ENCODE measurements at regions of chrX and their contacts with region 1.

Region 1: GRCh38 chrX:154428176-154429010 is at the start of gene ATP6AP1:
- DNase-seq: peak; percentile 81 to 92
- ATAC-seq: peak; percentile 97 to 99 (median 97)
- H3K4me3 ChIP-seq: peak within 1 kb of the TSS; percentile 60
- H3K4me3 Mint-ChIP-seq: peak within 1 kb of the TSS; percentile 86
- H3K27ac ChIP-seq: peak within 1 kb of the TSS; percentile 53
- H3K27ac Mint-ChIP-seq: peak within 1 kb of the TSS; percentile 83 to 84
- H3K4me1 ChIP-seq: peaks cover 37% of the 10 kb centered on the region
- H3K4me1 Mint-ChIP-seq: peaks cover 22 to 25% of the 10 kb centered on the region in 2 donors
- H3K27me3 ChIP-seq: no peaks in the 10 kb centered on the region
- H3K27me3 Mint-ChIP-seq: no peaks in the 10 kb centered on the region
- CTCF ChIP-seq: no peak
- total RNA-seq, gene ATP6AP1: 62.4 to 71.7 (median 65.9) TPM

Region 2: DNA sequence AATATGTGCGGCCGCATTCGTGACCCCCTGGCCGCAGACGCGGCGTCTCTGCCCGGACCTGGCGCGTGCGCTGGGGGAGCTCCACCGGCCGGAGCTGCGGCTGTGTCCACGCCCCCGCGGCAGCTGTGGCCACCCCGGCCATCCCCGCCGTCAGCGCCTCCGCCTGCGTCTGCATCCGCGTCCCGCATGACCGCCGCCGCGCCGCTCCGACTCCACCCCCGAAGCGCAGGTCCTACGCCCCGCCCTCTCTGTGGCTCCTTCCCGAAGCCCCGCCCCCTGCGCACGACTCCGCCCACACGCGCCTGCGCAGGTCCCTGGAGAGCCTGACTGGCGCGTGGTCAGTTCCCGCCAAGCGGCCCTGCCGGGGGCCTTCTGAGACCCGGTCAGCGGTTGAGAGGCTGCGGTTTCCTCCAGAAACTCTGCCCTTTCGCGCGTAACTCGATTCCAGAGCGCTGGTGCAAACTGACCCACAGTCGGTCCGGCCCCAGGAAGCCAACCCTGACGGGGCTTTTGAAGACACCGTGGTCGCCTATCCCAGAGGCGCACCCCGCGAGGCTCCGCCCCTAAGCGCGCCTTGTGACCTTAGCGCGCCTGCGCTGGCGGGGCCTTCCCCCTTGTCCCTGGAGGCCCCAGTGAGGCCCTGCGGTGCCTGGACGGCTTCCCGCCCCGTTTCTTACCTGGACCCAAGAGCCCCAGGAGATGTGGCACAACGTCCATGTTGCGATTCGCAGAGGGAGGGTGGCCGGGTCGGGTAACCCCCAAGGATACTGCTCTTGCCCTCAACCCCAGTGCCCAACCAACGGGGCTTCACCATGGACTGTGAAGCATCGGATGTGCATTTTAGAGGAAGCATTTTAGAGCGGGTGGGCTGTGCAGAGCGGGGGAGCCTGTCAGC is 50.6 kb after region 1 on chrX and contains the start of gene LAGE3:
- intact Hi-C with region 1: loop called (anchors 5 kb)
- DNase-seq: peak; percentile 94 to 97
- ATAC-seq: peak; percentile 86 to 97 (median 92)
- H3K4me3 ChIP-seq: peak within 1 kb of the TSS; percentile 48
- H3K4me3 Mint-ChIP-seq: peak within 1 kb of the TSS; percentile 81
- H3K27ac ChIP-seq: peak within 1 kb of the TSS; percentile 75
- H3K27ac Mint-ChIP-seq: peak within 1 kb of the TSS; percentile 90 to 92
- H3K4me1 ChIP-seq: peaks cover 19% of the 10 kb centered on the region
- H3K4me1 Mint-ChIP-seq: peaks cover 0 to 12% of the 10 kb centered on the region in 2 donors
- H3K27me3 ChIP-seq: no peaks in the 10 kb centered on the region
- H3K27me3 Mint-ChIP-seq: no peaks in the 10 kb centered on the region
- CTCF ChIP-seq: no peak
- total RNA-seq, gene LAGE3: 10.8 to 12.5 (median 10.9) TPM